B cell (primary cell): ENCODE measurements at regions of chr6 and their contacts with region 1.

Region 1: DNA sequence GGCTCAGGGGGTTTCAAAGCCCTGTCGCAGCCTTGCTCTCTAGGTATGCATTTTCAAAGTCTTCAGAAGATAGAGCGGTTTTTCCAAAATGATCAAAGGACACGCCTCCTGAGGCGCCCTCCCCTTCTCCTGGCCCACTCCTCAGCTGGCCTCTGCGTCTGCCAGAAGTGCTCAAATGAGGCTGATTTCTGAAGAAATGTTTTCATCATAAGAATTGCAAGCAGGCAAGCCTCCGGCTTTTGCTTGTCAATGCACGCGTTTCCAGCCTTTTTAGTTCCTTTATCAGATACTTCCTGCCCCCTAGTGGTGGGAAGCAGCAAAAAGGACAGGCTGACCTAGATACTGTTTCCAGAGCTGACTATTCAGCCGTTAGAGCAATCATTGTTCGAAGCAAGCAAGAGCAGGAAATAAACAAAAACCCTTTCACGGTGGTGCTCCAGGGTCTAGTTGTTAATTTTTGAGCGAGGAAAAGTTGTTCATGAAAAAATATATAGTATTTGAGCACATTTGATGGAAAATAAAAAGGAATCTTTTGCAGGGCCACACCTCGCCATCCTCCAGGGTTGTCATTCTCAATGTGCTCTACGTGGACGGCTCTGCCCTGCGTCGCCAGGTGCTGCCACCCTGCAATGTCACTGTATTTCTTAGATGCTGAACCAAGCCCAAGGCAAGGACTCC is 93.4 kb upstream of the ASF1A start:
- DNase-seq: peak; percentile 81
- ATAC-seq: peak; percentile 92
- H3K4me3 ChIP-seq: peak overlapping the region in 1 of 5 experiments; percentile 5
- H3K4me3 Mint-ChIP-seq: peak overlapping the region; percentile 47
- H3K27ac ChIP-seq: no peak overlapping the region
- H3K27ac Mint-ChIP-seq: no peak overlapping the region
- H3K4me1 ChIP-seq: peaks cover 7 to 18% of the 10 kb centered on the region in 2 donors
- H3K4me1 Mint-ChIP-seq: peaks cover 24% of the 10 kb centered on the region
- H3K27me3 ChIP-seq: no peaks in the 10 kb centered on the region
- H3K27me3 Mint-ChIP-seq: no peaks in the 10 kb centered on the region
- CTCF ChIP-seq: peak; percentile 98

Region 2: DNA sequence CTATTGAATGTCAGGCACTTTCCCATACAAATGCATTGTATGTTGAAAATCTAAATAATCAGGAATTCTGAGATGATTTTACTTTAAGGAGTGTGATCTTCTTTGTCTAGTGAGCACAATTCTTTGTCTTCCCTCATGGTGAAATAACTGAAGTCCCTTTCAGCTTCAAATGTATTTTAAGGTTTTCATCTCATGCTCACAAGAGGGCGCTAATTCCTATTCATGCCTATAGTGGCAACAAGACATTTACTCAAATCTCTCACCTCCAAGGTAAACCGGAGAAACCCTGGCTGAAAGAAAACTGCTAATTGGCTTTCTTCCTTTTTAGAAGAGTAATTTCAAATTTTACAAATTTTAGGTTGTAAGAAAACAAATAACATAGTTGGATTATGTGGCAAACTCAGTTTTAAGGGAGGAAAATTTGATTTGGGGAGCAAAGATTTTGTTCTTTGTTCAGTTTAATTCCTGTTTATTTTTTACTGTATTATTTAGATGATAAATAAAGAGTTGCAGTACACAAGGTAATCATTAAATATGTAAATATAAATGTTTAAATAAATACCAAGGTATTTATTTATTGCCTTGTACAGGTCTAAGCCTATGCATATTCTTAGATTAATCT is 824.4 kb before region 1 on chr6:
- CTCF ChIA-PET with region 1: no interaction called
- POLR2A ChIA-PET with region 1: no interaction called
- intact Hi-C with region 1: loop called (anchors 5 kb)
- DNase-seq: peak; percentile 19
- ATAC-seq: no peak
- H3K4me3 ChIP-seq: no peak overlapping the region
- H3K4me3 Mint-ChIP-seq: no peak overlapping the region
- H3K27ac ChIP-seq: no peak overlapping the region
- H3K27ac Mint-ChIP-seq: no peak overlapping the region
- H3K4me1 ChIP-seq: no peaks in the 10 kb centered on the region
- H3K4me1 Mint-ChIP-seq: no peaks in the 10 kb centered on the region
- H3K27me3 ChIP-seq: no peaks in the 10 kb centered on the region
- H3K27me3 Mint-ChIP-seq: peaks cover 8% of the 10 kb centered on the region
- CTCF ChIP-seq: peak; percentile 63

Region 3: DNA sequence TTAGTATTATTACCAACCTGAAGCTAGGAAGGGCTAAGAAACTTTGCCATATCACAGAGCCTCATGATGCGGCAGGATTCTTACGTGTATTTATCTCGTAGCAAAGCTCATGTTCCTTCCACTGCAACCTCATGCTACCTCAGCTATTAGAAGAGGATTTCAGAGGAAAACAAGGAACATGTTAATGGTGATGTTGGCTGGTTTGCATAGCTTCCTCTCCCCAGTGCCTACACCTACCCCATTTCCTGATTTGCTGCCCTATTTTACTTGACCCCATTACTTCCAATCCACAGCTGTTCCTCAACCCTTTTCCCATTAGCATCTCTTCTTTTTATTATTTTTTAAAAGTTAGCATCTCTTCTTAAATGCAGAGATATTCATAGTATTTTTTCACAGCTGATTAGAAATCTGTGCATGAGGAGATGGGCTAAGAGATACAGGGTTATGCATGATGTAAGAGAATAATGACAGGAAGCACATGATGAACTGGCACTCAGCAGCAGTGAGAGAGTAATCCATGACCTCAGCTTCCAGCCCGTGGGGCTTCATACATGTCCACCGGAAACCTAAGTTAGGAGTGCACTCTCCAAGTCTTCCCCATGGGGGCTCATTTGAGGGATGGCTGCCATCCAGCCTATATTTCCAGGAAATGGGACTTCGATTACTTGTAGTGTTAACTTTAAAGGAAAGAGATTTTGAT is 12.7 kb before region 1 on chr6:
- CTCF ChIA-PET with region 1: interaction called, 10 read pairs
- POLR2A ChIA-PET with region 1: no interaction called
- intact Hi-C with region 1: no loop called
- DNase-seq: no peak
- ATAC-seq: no peak
- H3K4me3 ChIP-seq: no peak overlapping the region
- H3K4me3 Mint-ChIP-seq: peak overlapping the region; percentile 1
- H3K27ac ChIP-seq: no peak overlapping the region
- H3K27ac Mint-ChIP-seq: no peak overlapping the region
- H3K4me1 ChIP-seq: peaks cover 7 to 12% of the 10 kb centered on the region in 2 donors
- H3K4me1 Mint-ChIP-seq: peaks cover 15% of the 10 kb centered on the region
- H3K27me3 ChIP-seq: no peaks in the 10 kb centered on the region
- H3K27me3 Mint-ChIP-seq: no peaks in the 10 kb centered on the region
- CTCF ChIP-seq: no peak